B cell (primary cell): ENCODE measurements at regions of chr9 and their contacts with region 1.

Region 1: DNA sequence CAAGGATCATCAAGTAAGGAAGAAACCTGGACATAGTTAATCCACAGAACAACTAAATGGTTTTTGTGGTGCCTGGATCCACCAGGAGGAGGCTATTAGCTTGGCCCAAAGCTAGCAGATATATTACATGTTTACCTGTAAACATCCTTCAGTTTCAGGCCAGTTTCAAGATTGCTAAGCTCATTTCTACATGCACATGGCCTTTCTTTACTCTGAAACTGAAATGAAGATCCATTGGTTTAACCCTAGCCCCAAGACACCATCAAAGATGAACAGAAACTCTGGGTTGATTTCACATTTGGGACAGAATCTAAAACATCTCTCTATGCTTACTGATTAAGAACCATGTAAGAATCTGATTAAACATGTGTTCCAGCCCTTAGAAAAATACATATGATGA is 611.8 kb downstream of the TLE1 start:
- DNase-seq: no peak
- ATAC-seq: no peak
- H3K4me3 ChIP-seq: no peak overlapping the region
- H3K4me3 Mint-ChIP-seq: no peak overlapping the region
- H3K27ac ChIP-seq: no peak overlapping the region
- H3K27ac Mint-ChIP-seq: no peak overlapping the region
- H3K4me1 ChIP-seq: peaks cover 0 to 12% of the 10 kb centered on the region in 2 donors
- H3K4me1 Mint-ChIP-seq: peaks cover 11% of the 10 kb centered on the region
- H3K27me3 ChIP-seq: no peaks in the 10 kb centered on the region
- H3K27me3 Mint-ChIP-seq: no peaks in the 10 kb centered on the region
- CTCF ChIP-seq: no peak

Region 2: GRCh38 chr9:81092057-81092456 is 14.5 kb after region 1 on chr9:
- CTCF ChIA-PET with region 1: no interaction called
- POLR2A ChIA-PET with region 1: no interaction called
- intact Hi-C with region 1: no loop called
- DNase-seq: no peak
- ATAC-seq: no peak
- H3K4me3 ChIP-seq: no peak overlapping the region
- H3K4me3 Mint-ChIP-seq: no peak overlapping the region
- H3K27ac ChIP-seq: no peak overlapping the region
- H3K27ac Mint-ChIP-seq: no peak overlapping the region
- H3K4me1 ChIP-seq: no peaks in the 10 kb centered on the region
- H3K4me1 Mint-ChIP-seq: no peaks in the 10 kb centered on the region
- H3K27me3 ChIP-seq: no peaks in the 10 kb centered on the region
- H3K27me3 Mint-ChIP-seq: no peaks in the 10 kb centered on the region
- CTCF ChIP-seq: no peak

Region 3: GRCh38 chr9:81132318-81132717 is 54.7 kb after region 1 on chr9:
- CTCF ChIA-PET with region 1: no interaction called
- POLR2A ChIA-PET with region 1: no interaction called
- intact Hi-C with region 1: loop called (anchors 10 kb)
- DNase-seq: no peak
- ATAC-seq: no peak
- H3K4me3 ChIP-seq: no peak overlapping the region
- H3K4me3 Mint-ChIP-seq: no peak overlapping the region
- H3K27ac ChIP-seq: no peak overlapping the region
- H3K27ac Mint-ChIP-seq: no peak overlapping the region
- H3K4me1 ChIP-seq: no peaks in the 10 kb centered on the region
- H3K4me1 Mint-ChIP-seq: no peaks in the 10 kb centered on the region
- H3K27me3 ChIP-seq: no peaks in the 10 kb centered on the region
- H3K27me3 Mint-ChIP-seq: peaks cover 2% of the 10 kb centered on the region
- CTCF ChIP-seq: no peak